ENCODE measurements at regions of chr12 and their contacts with region 1.

Region 1: GRCh38 chr12:122944623-122945592 is 21.4 kb downstream of the ABCB9 start:
- DNase-seq: no peak

Region 2: GRCh38 chr12:122721057-122721545 is 223.8 kb before region 1 on chr12:
- intact Hi-C with region 1: no loop called
- DNase-seq: no peak

Region 3: GRCh38 chr12:122860346-122861090 is 84.4 kb before region 1 on chr12:
- intact Hi-C with region 1: no loop called
- DNase-seq: peak; percentile 95

Region 4: GRCh38 chr12:122895705-122896636 is 48.9 kb before region 1 on chr12 and contains the start of gene VPS37B:
- intact Hi-C with region 1: loop called (anchors 5 kb)
- DNase-seq: peak; percentile 92
- total RNA-seq, gene VPS37B: 16.8 TPM

Region 5: GRCh38 chr12:123171967-123172366 is 227.1 kb after region 1 on chr12:
- intact Hi-C with region 1: no loop called
- DNase-seq: no peak

Measured in cardiac septum (tissue), 1 donor.